Posterior vena cava (tissue), 2 donors: ENCODE measurements at regions of chr20 and their contacts with region 1.

Region 1: DNA sequence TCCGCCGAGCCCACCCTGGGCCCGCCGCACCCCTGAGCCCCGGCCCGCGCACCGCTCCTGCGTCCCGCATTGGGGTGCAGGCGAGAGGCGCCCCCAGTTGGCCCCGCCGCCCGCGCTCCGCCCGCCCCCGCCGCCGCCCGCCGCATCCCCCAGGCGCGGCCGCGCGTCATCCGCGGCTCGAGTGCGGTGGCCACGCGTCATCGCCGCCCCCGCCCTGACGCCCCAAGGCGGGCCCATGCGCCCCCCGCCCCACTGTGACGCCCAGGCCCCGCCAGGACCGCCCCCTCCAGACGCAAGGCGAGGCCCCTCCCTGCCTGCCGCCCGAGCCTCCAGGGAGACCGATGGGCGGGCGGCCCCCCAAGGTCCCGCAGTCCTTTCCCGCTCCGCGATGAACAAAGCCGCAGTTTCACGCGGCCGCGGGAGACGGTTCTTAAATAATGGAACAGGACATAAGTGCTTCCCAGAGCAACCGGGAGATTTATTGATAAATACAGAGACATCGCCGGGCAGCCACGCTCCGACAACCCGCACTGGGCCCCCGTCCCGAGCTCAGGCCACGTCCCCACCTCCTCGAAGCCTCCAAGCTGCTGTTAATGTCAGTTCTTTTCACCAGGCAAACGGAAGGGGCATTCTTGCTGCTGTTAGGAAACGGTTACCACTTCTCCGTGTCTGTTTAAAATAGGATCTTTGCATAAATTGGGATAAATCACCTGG is at the start of gene ANKRD60:
- DNase-seq: peak; percentile 76
- total RNA-seq, gene ANKRD60: not detected

Region 2: GRCh38 chr20:58160451-58161061 is 68.1 kb before region 1 on chr20:
- intact Hi-C with region 1: loop called in 1 of 2 experiments (anchors 10 kb)
- DNase-seq: no peak